A549 (cell line): ENCODE measurements at regions of chr12 and their contacts with region 1.

Region 1: GRCh38 chr12:7460375-7461259 is 16.7 kb upstream of the CD163L1 start:
- DNase-seq: peak; percentile 66
- ATAC-seq: peak; percentile 97 to 99
- H3K4me3 ChIP-seq: no peak overlapping the region
- H3K27ac ChIP-seq: no peak overlapping the region
- H3K4me1 ChIP-seq: no peaks in the 10 kb centered on the region
- CTCF ChIP-seq: peak; percentile 93
- EP300 ChIP-seq: no peak
- POLR2A ChIP-seq: no peak
- RAD21 ChIP-seq: peak; percentile 95 to 98

Region 2: GRCh38 chr12:7210642-7211151 is 249.9 kb before region 1 on chr12:
- CTCF ChIA-PET with region 1: interaction called, 21 read pairs
- POLR2A ChIA-PET with region 1: no interaction called
- DNase-seq: no peak
- ATAC-seq: no peak
- H3K4me3 ChIP-seq: no peak overlapping the region
- H3K27ac ChIP-seq: no peak overlapping the region
- H3K4me1 ChIP-seq: no peaks in the 10 kb centered on the region
- CTCF ChIP-seq: no peak
- EP300 ChIP-seq: no peak
- POLR2A ChIP-seq: no peak
- RAD21 ChIP-seq: no peak

Region 3: DNA sequence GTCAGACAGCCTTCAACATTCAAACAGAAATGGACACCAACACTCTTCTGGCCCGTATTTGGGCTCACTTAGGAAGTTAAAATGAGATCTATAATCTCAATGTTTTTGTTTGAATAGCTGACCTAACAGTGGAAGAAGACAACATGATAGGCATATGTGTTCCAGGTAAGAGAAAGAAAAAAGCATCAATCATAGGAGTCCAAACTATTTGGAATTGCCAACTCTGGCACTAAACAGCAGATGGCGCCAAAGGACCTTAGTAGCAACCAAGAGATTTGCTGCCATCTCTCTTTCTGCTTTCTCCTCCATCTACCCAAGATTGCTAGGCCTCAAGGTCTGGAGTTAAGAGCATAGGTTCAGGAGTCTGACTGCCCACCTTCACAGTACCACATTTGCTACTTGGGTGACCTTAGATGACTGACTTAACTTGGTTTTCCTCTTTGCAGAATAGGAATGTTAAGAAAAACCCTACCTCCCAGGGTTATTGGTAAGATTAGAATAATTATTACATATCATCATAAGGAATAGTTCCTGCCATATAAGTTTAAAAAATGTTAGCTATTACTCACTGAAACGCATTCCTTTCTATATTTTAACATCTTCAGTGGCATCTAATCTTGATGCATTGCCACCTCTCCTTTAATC is 240.9 kb before region 1 on chr12:
- CTCF ChIA-PET with region 1: interaction called, 50 read pairs
- POLR2A ChIA-PET with region 1: no interaction called
- DNase-seq: peak; percentile 47 to 83
- ATAC-seq: peak; percentile 83 to 86; a peak in 5 of 6 replicates
- H3K4me3 ChIP-seq: no peak overlapping the region
- H3K27ac ChIP-seq: no peak overlapping the region
- H3K4me1 ChIP-seq: no peaks in the 10 kb centered on the region
- CTCF ChIP-seq: peak; percentile 93
- EP300 ChIP-seq: no peak
- POLR2A ChIP-seq: no peak
- RAD21 ChIP-seq: peak; percentile 96 to 99

Region 4: GRCh38 chr12:7374423-7375144 is 86.0 kb before region 1 on chr12:
- CTCF ChIA-PET with region 1: interaction called, 10 read pairs
- POLR2A ChIA-PET with region 1: interaction called, 4 read pairs
- DNase-seq: peak; percentile 56 to 60
- ATAC-seq: peak; percentile 88 to 95
- H3K4me3 ChIP-seq: no peak overlapping the region
- H3K27ac ChIP-seq: no peak overlapping the region
- H3K4me1 ChIP-seq: no peaks in the 10 kb centered on the region
- CTCF ChIP-seq: peak; percentile 60
- EP300 ChIP-seq: no peak
- POLR2A ChIP-seq: no peak
- RAD21 ChIP-seq: peak; percentile 70 to 87

Region 5: DNA sequence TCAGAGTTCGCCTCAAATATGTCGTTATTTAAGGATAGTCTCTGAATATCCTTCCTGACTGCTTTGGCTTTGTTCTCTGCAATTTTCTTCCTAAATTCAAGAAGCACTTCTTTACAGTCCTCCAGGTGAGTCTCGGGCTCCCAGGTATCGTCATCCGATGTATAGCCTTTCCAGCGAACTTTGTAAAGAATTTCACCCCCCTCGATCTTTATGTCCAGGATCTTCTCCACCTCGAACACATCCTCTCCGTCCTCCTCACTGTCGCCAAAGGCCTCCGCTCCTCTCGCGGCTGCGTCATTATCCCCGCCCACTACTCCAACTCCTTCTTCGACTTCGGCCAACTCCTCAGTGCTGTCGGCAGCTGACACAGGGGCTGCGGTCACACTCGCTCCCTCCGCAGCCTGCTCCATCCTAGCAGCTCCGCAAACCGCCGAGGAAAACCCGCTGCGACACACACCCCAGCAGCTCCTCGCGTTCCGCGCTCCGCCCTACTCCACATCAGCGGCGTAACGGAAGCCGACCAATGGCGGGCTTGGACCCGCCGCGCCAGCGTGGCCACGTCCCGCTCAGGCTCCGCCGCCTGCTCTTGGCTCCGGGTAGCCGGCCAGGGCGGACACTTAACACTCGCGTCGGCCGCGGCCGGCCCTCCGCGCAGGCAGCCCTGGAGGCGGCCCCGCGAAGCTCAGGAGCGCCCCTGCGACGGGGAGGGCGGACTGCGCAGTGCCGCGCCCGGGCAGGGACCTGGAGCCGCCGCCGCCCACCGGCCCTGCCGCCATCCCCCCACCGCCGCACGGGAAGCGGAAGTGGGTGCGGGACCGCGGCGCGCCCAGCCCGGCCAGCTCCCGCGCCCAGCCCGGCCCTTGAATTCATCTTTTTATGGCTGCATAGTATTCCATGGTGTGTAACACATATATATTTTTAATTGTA is 20.8 kb before region 1 on chr12:
- CTCF ChIA-PET with region 1: interaction called, 13 read pairs
- POLR2A ChIA-PET with region 1: no interaction called
- DNase-seq: peak; percentile 53 to 93
- ATAC-seq: peak; percentile 98 to 99
- H3K4me3 ChIP-seq: peak overlapping the region; percentile 51
- H3K27ac ChIP-seq: peak overlapping the region; percentile 71 to 92
- H3K4me1 ChIP-seq: no peaks in the 10 kb centered on the region
- CTCF ChIP-seq: peak; percentile 37
- EP300 ChIP-seq: no peak
- POLR2A ChIP-seq: peak; percentile 63
- RAD21 ChIP-seq: peak in 1 of 2 experiments; percentile 26; a peak in 1 of 5 replicates

Region 6: DNA sequence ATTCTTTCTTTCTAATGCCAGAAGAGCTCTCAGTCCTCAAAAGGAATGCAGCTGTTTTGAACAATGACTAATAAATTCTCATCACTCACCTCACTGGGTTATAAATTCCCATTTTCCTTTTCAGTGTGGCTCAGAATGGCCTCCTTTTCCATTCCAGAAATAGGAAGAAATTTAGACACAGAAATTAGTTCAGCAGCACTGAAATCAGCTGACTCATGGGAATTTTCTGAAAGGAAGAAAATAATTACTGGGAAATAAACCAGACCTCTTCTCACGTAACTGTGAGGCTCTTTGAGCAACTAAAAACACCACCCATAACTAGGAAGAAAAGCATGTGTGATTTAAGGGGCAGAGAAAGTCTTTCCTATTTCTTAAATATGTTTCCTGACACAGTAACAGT is 19.2 kb after region 1 on chr12:
- CTCF ChIA-PET with region 1: interaction called, 12 read pairs
- POLR2A ChIA-PET with region 1: no interaction called
- DNase-seq: no peak
- ATAC-seq: no peak
- H3K4me3 ChIP-seq: no peak overlapping the region
- H3K27ac ChIP-seq: no peak overlapping the region
- H3K4me1 ChIP-seq: no peaks in the 10 kb centered on the region
- CTCF ChIP-seq: no peak
- EP300 ChIP-seq: no peak
- POLR2A ChIP-seq: no peak
- RAD21 ChIP-seq: no peak